ENCODE measurements at regions of chr19 and their contacts with region 1.

Region 1: DNA sequence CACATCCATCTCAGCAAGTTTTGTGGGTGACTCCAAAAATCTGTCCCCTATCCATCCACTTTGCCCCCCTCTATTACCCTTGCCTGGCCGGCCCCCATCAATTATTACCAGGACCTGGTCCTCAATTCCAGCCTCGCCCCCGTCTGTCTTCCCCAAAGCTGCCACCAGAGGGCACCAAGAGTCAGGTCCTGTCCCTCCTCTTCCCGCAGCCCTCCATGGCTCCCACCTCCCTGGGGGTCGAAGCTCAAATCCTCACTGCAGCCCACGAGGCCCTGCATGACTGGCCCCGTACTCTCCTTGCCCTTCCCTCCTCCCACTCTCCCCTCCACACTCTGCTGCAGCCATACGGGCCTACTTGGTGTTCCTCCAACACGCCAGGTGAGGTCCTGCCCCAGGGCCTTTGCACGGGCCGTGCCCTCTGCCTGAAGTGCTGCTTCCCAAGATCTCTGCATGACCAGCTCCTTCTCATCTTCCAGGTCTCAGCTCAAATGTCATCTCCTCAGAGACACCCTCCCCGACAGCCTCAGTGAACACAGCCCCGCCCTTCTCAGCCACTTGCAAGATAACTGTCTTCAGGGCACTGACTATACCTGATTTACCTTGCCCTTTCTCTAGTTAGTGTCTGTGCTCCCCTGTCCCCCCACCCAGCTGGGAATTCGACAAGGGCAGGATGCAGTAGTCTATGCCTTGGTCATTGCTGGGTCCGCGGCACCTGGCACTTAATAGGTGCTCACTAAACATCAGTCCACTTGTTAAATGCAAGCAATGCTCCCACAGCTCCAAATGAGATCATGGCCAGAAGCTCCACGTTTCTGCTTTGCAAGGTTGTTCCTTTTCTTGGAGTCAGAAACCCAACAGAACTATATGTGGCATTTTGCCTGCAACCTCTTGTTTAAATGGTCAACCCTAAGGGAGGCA is 16.8 kb upstream of the SEMA6B start:
- DNase-seq: peak; percentile 33 to 36
- ATAC-seq: peak; percentile 41 to 58
- H3K4me3 ChIP-seq: no peak overlapping the region
- H3K27ac ChIP-seq: peak overlapping the region; percentile 49 to 78 (median 72)
- H3K4me1 ChIP-seq: peaks cover 0 to 8% of the 10 kb centered on the region in 2 donors
- H3K27me3 ChIP-seq: peaks cover 5 to 20% (median 16%) of the 10 kb centered on the region in 3 donors
- CTCF ChIP-seq: peak; percentile 46 to 80 (median 75)
- POLR2A ChIP-seq: no peak

Region 2: GRCh38 chr19:4524808-4525562 is 51.3 kb before region 1 on chr19:
- in situ Hi-C with region 1: no loop called
- intact Hi-C with region 1: no loop called
- DNase-seq: peak in 1 of 2 donors; percentile 50
- ATAC-seq: peak in 1 of 2 donors; percentile 36
- H3K4me3 ChIP-seq: no peak overlapping the region
- H3K27ac ChIP-seq: peak overlapping the region in 2 of 4 donors; percentile 22 to 33
- H3K4me1 ChIP-seq: no peaks in the 10 kb centered on the region
- H3K27me3 ChIP-seq: no peaks in the 10 kb centered on the region
- CTCF ChIP-seq: peak; percentile 35 to 80 (median 70)
- POLR2A ChIP-seq: no peak

Region 3: GRCh38 chr19:4633140-4633967 is 57.1 kb after region 1 on chr19:
- in situ Hi-C with region 1: loop called in 2 of 4 experiments (anchors 5 to 10 kb)
- intact Hi-C with region 1: loop called (anchors 1 kb)
- DNase-seq: peak in 1 of 2 donors; percentile 56
- ATAC-seq: peak; percentile 48 to 70
- H3K4me3 ChIP-seq: no peak overlapping the region
- H3K27ac ChIP-seq: peak overlapping the region in 1 of 4 donors; percentile 27
- H3K4me1 ChIP-seq: peaks cover 14% of the 10 kb centered on the region in 2 donors
- H3K27me3 ChIP-seq: peaks cover 0 to 2% (median 0%) of the 10 kb centered on the region in 3 donors
- CTCF ChIP-seq: peak; percentile 41 to 79 (median 70)
- POLR2A ChIP-seq: no peak

Region 4: DNA sequence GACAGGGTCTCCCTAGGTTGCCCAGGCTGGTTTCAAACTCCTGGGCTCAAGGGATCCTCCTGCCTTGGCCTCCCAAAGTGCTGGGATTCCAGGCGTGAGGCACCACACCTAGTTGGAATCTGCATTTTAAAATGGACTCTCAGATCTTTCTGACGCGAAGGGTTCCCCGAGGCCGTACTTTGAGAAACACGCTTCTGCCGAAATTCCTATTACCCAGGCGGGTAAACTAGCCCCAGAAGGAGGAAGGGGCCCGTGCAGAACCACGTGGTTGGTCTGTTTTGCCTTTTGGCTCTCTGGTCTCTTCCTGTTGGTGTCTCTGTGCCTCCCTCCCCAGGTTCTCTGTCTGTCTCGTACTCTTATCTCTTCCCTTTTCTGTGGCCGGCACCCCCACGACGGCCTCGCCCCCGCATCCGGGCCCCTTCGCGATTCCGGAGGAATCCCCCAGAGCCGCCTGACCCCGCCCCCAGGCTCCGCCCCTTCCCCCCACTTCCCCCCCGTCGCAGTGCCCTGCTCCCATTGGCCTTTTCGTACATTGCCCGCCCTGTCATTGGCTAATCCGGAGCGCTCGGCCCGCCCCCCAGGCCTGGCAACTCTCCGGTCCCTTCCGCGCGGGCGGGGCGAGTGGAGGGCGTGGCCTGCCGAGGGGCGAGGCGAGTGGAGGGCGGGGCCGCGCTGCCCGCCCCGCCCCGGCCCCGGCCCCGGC is 62.7 kb after region 1 on chr19 and contains the start of gene TNFAIP8L1:
- in situ Hi-C with region 1: loop called in 2 of 4 experiments (anchors 5 to 10 kb)
- intact Hi-C with region 1: no loop called
- DNase-seq: peak; percentile 93 to 94
- ATAC-seq: peak; percentile 92 to 95
- H3K4me3 ChIP-seq: peak within 1 kb of the TSS; percentile 62 to 82 (median 77)
- H3K27ac ChIP-seq: peak within 1 kb of the TSS; percentile 79 to 83 (median 80)
- H3K4me1 ChIP-seq: peaks cover 26 to 28% of the 10 kb centered on the region in 2 donors
- H3K27me3 ChIP-seq: no peaks in the 10 kb centered on the region
- CTCF ChIP-seq: no peak
- POLR2A ChIP-seq: no peak
- total RNA-seq, gene TNFAIP8L1: 1.3 to 2.9 (median 1.7) TPM

Region 5: GRCh38 chr19:5172859-5173577 is 596.7 kb after region 1 on chr19:
- in situ Hi-C with region 1: no loop called
- intact Hi-C with region 1: no loop called
- DNase-seq: no peak
- ATAC-seq: no peak
- H3K4me3 ChIP-seq: no peak overlapping the region
- H3K27ac ChIP-seq: no peak overlapping the region
- H3K4me1 ChIP-seq: no peaks in the 10 kb centered on the region
- H3K27me3 ChIP-seq: no peaks in the 10 kb centered on the region
- CTCF ChIP-seq: no peak
- POLR2A ChIP-seq: no peak